B cell (primary cell): ENCODE measurements at regions of chr9 and their contacts with region 1.

Region 1: GRCh38 chr9:137423004-137423874 is at the starts of genes EXD3 and NOXA1:
- DNase-seq: peak; percentile 96
- ATAC-seq: peak; percentile 94
- H3K4me3 ChIP-seq: peak within 1 kb of the TSS; percentile 36 to 70 (median 65)
- H3K4me3 Mint-ChIP-seq: peak within 1 kb of the TSS; percentile 86
- H3K27ac ChIP-seq: peak within 1 kb of the TSS in 1 of 2 donors; percentile 58
- H3K27ac Mint-ChIP-seq: peak within 1 kb of the TSS; percentile 59
- H3K4me1 ChIP-seq: peaks cover 12 to 19% of the 10 kb centered on the region in 2 donors
- H3K4me1 Mint-ChIP-seq: peaks cover 11% of the 10 kb centered on the region
- H3K27me3 ChIP-seq: no peaks in the 10 kb centered on the region
- H3K27me3 Mint-ChIP-seq: no peaks in the 10 kb centered on the region
- CTCF ChIP-seq: peak; percentile 69
- total RNA-seq, gene EXD3: 23.7 and 25.1 TPM in 2 replicates
- total RNA-seq, gene NOXA1: 5.7 and 8.4 TPM in 2 replicates

Region 2: GRCh38 chr9:137411671-137412380 is 11.4 kb before region 1 on chr9:
- CTCF ChIA-PET with region 1: interaction called, 11 read pairs
- POLR2A ChIA-PET with region 1: no interaction called
- intact Hi-C with region 1: no loop called
- DNase-seq: peak; percentile 50
- ATAC-seq: peak; percentile 56
- H3K4me3 ChIP-seq: no peak overlapping the region
- H3K4me3 Mint-ChIP-seq: peak overlapping the region; percentile 10
- H3K27ac ChIP-seq: no peak overlapping the region
- H3K27ac Mint-ChIP-seq: no peak overlapping the region
- H3K4me1 ChIP-seq: peaks cover 18 to 26% of the 10 kb centered on the region in 2 donors
- H3K4me1 Mint-ChIP-seq: peaks cover 17% of the 10 kb centered on the region
- H3K27me3 ChIP-seq: peaks cover 0 to 24% (median 10%) of the 10 kb centered on the region in 4 experiments
- H3K27me3 Mint-ChIP-seq: no peaks in the 10 kb centered on the region
- CTCF ChIP-seq: no peak

Region 3: DNA sequence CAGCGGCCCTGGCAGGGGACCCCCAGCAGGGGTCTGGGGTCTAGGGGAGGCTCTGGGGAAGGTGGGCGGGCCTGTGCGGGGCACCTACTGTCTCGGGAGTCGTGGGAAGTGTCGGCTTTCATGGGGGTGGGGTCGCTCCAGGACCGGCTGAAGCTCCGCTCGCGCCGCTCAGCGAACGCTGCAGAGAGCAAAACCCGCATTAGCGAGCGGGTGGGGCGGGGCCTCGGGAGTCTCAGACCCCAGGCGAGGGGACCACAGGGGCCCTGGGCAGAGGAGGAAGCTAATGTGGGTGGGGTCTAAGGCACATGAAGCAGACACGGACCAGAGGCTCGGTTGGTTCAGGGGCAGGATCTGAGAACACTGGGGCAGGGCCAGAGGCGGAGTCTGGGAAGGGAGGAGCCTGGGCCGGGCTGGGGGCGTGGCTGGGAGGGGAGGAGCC is 30.4 kb after region 1 on chr9:
- CTCF ChIA-PET with region 1: no interaction called
- POLR2A ChIA-PET with region 1: interaction called, 9 read pairs
- intact Hi-C with region 1: loop called (anchors 1 kb)
- DNase-seq: peak; percentile 85
- ATAC-seq: peak; percentile 86
- H3K4me3 ChIP-seq: peak overlapping the region in 4 of 5 experiments; percentile 11 to 51 (median 38)
- H3K4me3 Mint-ChIP-seq: peak overlapping the region; percentile 71
- H3K27ac ChIP-seq: no peak overlapping the region
- H3K27ac Mint-ChIP-seq: no peak overlapping the region
- H3K4me1 ChIP-seq: peaks cover 37 to 56% of the 10 kb centered on the region in 2 donors
- H3K4me1 Mint-ChIP-seq: peaks cover 29% of the 10 kb centered on the region
- H3K27me3 ChIP-seq: no peaks in the 10 kb centered on the region
- H3K27me3 Mint-ChIP-seq: no peaks in the 10 kb centered on the region
- CTCF ChIP-seq: no peak

Region 4: GRCh38 chr9:137524984-137525323 is 101.7 kb after region 1 on chr9:
- CTCF ChIA-PET with region 1: interaction called, 4 read pairs
- POLR2A ChIA-PET with region 1: no interaction called
- intact Hi-C with region 1: loop called (anchors 5 kb)
- DNase-seq: no peak
- ATAC-seq: no peak
- H3K4me3 ChIP-seq: no peak overlapping the region
- H3K4me3 Mint-ChIP-seq: no peak overlapping the region
- H3K27ac ChIP-seq: no peak overlapping the region
- H3K27ac Mint-ChIP-seq: no peak overlapping the region
- H3K4me1 ChIP-seq: peaks cover 0 to 4% of the 10 kb centered on the region in 2 donors
- H3K4me1 Mint-ChIP-seq: peaks cover 3% of the 10 kb centered on the region
- H3K27me3 ChIP-seq: no peaks in the 10 kb centered on the region
- H3K27me3 Mint-ChIP-seq: no peaks in the 10 kb centered on the region
- CTCF ChIP-seq: no peak